H1 (cell line): ENCODE measurements at regions of chr10 and their contacts with region 1.

Region 1: GRCh38 chr10:72273410-72274212 is at the start of gene DDIT4:
- DNase-seq: peak; percentile 98
- H3K4me3 ChIP-seq: peak within 1 kb of the TSS; percentile 88 to 94 (median 93)
- H3K27ac ChIP-seq: peak within 1 kb of the TSS; percentile 85
- H3K4me1 ChIP-seq: peaks cover 0 to 19% (median 15%) of the 10 kb centered on the region in 4 experiments; a peak in 6 of 7 replicates
- H3K27me3 ChIP-seq: no peaks in the 10 kb centered on the region
- CTCF ChIP-seq: no peak
- EP300 ChIP-seq: 0 out of 3 replicates have a peak, but pooled peaks of 1 of the 2 experiments have one; percentile 42
- POLR2A ChIP-seq: peak; percentile 100
- RAD21 ChIP-seq: no peak
- total RNA-seq, gene DDIT4: 42.1 and 47.4 TPM in 2 replicates

Region 2: GRCh38 chr10:71985542-71986250 is 287.9 kb before region 1 on chr10:
- CTCF ChIA-PET with region 1: no interaction called
- POLR2A ChIA-PET with region 1: no interaction called
- DNase-seq: no peak
- H3K4me3 ChIP-seq: no peak overlapping the region
- H3K27ac ChIP-seq: no peak overlapping the region
- H3K4me1 ChIP-seq: peaks cover 0 to 3% (median 1%) of the 10 kb centered on the region in 4 experiments; a peak in 1 of 7 replicates
- H3K27me3 ChIP-seq: no peaks in the 10 kb centered on the region
- CTCF ChIP-seq: no peak
- EP300 ChIP-seq: no peak
- POLR2A ChIP-seq: no peak
- RAD21 ChIP-seq: no peak

Region 3: GRCh38 chr10:72215652-72216549 is 57.7 kb before region 1 on chr10 and contains the starts of genes ANAPC16 and ASCC1:
- CTCF ChIA-PET with region 1: interaction called, 6 read pairs
- POLR2A ChIA-PET with region 1: interaction called, 40 read pairs
- DNase-seq: peak; percentile 75 to 98
- H3K4me3 ChIP-seq: peak within 1 kb of the TSS; percentile 76 to 85 (median 81)
- H3K27ac ChIP-seq: peak within 1 kb of the TSS; percentile 98
- H3K4me1 ChIP-seq: peaks cover 0 to 7% (median 3%) of the 10 kb centered on the region in 4 experiments; a peak in 3 of 7 replicates
- H3K27me3 ChIP-seq: no peaks in the 10 kb centered on the region
- CTCF ChIP-seq: no peak
- EP300 ChIP-seq: no peak
- POLR2A ChIP-seq: peak; percentile 95 to 99
- RAD21 ChIP-seq: 0 out of 4 replicates have a peak, but pooled peaks of 1 of the 2 experiments have one; percentile 0
- total RNA-seq, gene ANAPC16: 56.2 and 57.4 TPM in 2 replicates
- total RNA-seq, gene ASCC1: 30.2 and 35.8 TPM in 2 replicates

Region 4: DNA sequence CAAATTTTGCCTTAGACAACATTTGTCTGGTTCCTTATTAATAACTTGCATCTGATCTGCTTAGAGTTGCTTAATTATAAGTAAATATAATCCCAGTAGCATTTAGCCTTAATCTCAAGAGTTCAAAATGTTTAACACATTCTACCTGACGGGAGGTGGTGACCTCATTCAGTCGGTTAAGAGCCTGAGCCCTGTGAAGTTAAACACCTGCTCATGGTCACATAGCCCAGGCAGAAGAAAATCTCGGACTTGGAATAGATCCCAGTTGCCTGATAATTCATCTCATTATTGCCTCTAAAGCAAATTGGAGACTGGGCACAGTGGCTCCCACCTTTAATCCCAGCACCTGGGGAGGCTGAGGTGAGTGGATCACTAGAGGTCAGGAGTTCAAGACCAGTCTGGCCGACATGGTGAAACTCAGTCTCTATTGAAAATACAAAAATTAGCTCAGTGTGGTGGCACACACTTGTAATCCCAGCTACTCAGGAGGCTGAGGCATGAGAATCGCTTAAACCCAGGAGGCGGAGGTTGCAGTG is 39.0 kb before region 1 on chr10:
- CTCF ChIA-PET with region 1: interaction called, 5 read pairs
- POLR2A ChIA-PET with region 1: interaction called, 25 read pairs
- DNase-seq: no peak
- H3K4me3 ChIP-seq: no peak overlapping the region
- H3K27ac ChIP-seq: no peak overlapping the region
- H3K4me1 ChIP-seq: peaks cover 0 to under 1% (median 0%) of the 10 kb centered on the region in 4 experiments; a peak in 2 of 7 replicates
- H3K27me3 ChIP-seq: no peaks in the 10 kb centered on the region
- CTCF ChIP-seq: no peak
- EP300 ChIP-seq: no peak
- POLR2A ChIP-seq: no peak
- RAD21 ChIP-seq: no peak

Region 5: GRCh38 chr10:72260588-72261322 is 12.9 kb before region 1 on chr10:
- CTCF ChIA-PET with region 1: interaction called, 39 read pairs
- POLR2A ChIA-PET with region 1: interaction called, 673 read pairs
- DNase-seq: peak; percentile 93 to 96
- H3K4me3 ChIP-seq: peak overlapping the region; percentile 31 to 56 (median 46); a peak in 7 of 8 replicates
- H3K27ac ChIP-seq: peak overlapping the region; percentile 87
- H3K4me1 ChIP-seq: peaks cover 17 to 34% (median 24%) of the 10 kb centered on the region in 4 experiments
- H3K27me3 ChIP-seq: no peaks in the 10 kb centered on the region
- CTCF ChIP-seq: peak; percentile 19 to 47 (median 21); a peak in 3 of 4 replicates
- EP300 ChIP-seq: peak; percentile 14 to 68; a peak in 2 of 3 replicates
- POLR2A ChIP-seq: peak in 1 of 2 experiments; percentile 68; a peak in 1 of 3 replicates
- RAD21 ChIP-seq: peak; percentile 23 to 54; a peak in 2 of 4 replicates

Region 6: GRCh38 chr10:72297968-72298773 is 24.6 kb after region 1 on chr10:
- CTCF ChIA-PET with region 1: interaction called, 26 read pairs
- POLR2A ChIA-PET with region 1: interaction called, 895 read pairs
- DNase-seq: peak; percentile 77 to 96
- H3K4me3 ChIP-seq: peak overlapping the region; percentile 43 to 70 (median 56)
- H3K27ac ChIP-seq: peak overlapping the region; percentile 51
- H3K4me1 ChIP-seq: peaks cover 5 to 21% (median 12%) of the 10 kb centered on the region in 4 experiments
- H3K27me3 ChIP-seq: no peaks in the 10 kb centered on the region; a peak in 1 of 7 replicates
- CTCF ChIP-seq: peak in 1 of 3 experiments; percentile 5; a peak in 1 of 4 replicates
- EP300 ChIP-seq: no peak
- POLR2A ChIP-seq: peak in 1 of 2 experiments; percentile 13; a peak in 1 of 3 replicates
- RAD21 ChIP-seq: no peak

Region 7: GRCh38 chr10:72337020-72337629 is 63.5 kb after region 1 on chr10:
- CTCF ChIA-PET with region 1: interaction called, 91 read pairs
- POLR2A ChIA-PET with region 1: interaction called, 895 read pairs
- DNase-seq: peak in 1 of 2 experiments; percentile 91
- H3K4me3 ChIP-seq: no peak overlapping the region
- H3K27ac ChIP-seq: no peak overlapping the region
- H3K4me1 ChIP-seq: peaks cover 0 to 22% (median 11%) of the 10 kb centered on the region in 4 experiments; a peak in 6 of 7 replicates
- H3K27me3 ChIP-seq: no peaks in the 10 kb centered on the region
- CTCF ChIP-seq: peak in 2 of 3 experiments; percentile 92 to 93; a peak in 3 of 4 replicates
- EP300 ChIP-seq: no peak
- POLR2A ChIP-seq: no peak
- RAD21 ChIP-seq: peak; percentile 91 to 95

Region 8: DNA sequence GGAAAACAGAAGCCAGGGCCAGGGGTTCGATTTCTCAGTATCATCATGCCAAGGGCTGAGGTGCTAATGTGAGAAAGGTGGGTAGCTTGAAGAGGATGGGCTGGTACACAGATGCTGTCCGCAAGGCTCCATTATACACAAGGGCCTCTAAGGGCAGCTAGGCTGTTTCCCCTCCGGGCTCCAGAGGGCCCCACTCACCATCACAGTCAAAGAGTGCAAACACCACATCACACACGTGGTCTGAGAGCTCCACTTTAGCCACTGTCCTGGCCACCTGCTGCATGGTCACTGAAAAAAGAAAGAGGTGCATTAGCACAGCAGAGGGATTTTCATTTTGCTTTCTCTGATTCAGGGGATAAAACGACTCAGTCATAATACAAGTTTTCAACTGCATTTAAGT is 102.0 kb after region 1 on chr10:
- CTCF ChIA-PET with region 1: no interaction called
- POLR2A ChIA-PET with region 1: no interaction called
- DNase-seq: no peak
- H3K4me3 ChIP-seq: no peak overlapping the region
- H3K27ac ChIP-seq: no peak overlapping the region
- H3K4me1 ChIP-seq: no peaks in the 10 kb centered on the region
- H3K27me3 ChIP-seq: no peaks in the 10 kb centered on the region
- CTCF ChIP-seq: peak; percentile 44 to 57 (median 47)
- EP300 ChIP-seq: no peak
- POLR2A ChIP-seq: no peak
- RAD21 ChIP-seq: peak; percentile 71 to 77

Region 9: GRCh38 chr10:72567884-72568640 is 294.5 kb after region 1 on chr10:
- CTCF ChIA-PET with region 1: no interaction called
- POLR2A ChIA-PET with region 1: no interaction called
- DNase-seq: no peak
- H3K4me3 ChIP-seq: no peak overlapping the region
- H3K27ac ChIP-seq: no peak overlapping the region
- H3K4me1 ChIP-seq: no peaks in the 10 kb centered on the region
- H3K27me3 ChIP-seq: no peaks in the 10 kb centered on the region
- CTCF ChIP-seq: peak in 2 of 3 experiments; percentile 42 to 49; a peak in 3 of 4 replicates
- EP300 ChIP-seq: no peak
- POLR2A ChIP-seq: no peak
- RAD21 ChIP-seq: peak; percentile 55 to 65